ENCODE measurements at regions of chr17 and their contacts with region 1.

Region 1: DNA sequence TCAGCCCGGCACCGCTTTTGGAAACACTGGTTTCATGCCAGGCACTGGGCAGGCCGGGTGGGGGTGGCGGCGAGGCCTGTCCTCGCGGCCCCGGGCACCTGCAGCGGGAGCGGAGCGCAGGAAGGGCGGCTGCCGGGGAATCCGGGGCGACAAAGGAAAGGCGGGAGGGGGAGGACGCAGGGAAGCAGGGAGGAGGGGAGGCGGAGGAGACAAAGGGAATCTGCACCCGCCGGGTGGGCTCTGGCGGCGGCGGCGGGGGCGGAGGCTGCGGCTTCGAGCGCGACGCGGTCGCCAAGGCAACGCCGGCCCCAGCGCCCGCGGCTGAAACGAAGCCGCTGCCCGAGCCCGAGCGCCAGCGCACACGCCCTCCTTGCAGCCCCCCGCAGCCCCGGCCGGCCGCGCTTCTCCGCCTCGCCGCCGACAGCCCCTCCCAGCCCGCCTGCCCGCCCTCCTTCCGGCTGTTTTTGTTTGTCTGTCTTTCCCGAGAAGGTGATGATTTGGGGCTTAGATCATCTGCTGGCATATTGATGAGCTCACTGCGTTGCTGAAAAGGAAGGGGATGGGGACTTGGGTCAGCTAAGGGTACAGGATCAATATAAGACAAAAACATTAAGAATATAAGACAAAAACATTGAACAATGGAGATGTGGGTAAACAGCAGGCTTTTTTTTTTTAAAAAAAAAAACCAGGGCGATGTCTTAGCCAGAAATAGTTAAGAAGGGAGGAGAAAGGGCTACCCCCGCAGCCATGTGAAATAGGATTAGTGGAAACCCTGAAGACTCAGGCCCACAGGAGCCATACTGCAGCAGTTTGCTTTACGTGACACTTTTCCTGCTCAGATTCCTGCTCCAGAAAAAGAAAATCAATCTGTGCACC is 32.7 kb downstream of the CDK5R1 start:
- DNase-seq: peak; percentile 56
- H3K4me3 Mint-ChIP-seq: peak overlapping the region; percentile 88
- H3K27ac Mint-ChIP-seq: peak overlapping the region; percentile 97
- H3K4me1 Mint-ChIP-seq: peaks cover 82% of the 10 kb centered on the region
- H3K27me3 Mint-ChIP-seq: peaks cover 7% of the 10 kb centered on the region

Region 2: DNA sequence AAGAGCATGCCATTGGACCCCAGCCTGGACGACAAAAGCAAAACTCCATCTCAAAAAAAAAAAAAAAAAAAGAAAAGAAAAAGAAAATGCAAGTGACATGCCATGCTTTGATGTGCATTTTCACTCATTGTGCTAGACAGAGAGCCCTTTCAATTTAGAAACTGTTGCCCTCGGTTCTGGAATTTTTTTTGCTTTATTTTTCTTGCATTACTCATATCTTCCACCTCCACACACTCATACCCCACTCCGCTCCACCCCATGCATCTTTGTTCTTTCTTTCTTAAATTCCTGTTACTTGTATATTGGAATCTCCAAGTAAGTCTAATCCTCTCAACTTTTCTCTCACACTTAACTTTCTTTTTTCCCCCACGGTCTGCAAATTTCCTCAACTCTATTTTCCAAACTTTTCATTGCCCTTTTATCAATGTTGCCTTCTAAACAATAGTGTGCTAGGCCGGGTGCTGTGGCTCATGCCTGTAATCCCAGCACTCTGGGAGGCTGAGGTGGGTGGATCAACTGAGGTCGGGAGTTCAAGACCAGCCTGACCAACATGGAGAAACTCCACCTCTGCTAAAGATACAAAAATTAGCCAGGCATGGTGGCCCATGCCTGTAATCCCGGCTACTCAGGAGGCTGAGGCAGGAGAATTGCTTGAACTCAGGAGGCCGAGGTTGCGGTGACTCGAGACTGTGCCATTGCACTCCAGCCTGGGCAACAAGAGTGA is 599.5 kb before region 1 on chr17:
- intact Hi-C with region 1: loop called (anchors 10 kb)
- DNase-seq: no peak
- H3K4me3 Mint-ChIP-seq: peak overlapping the region; percentile 9
- H3K27ac Mint-ChIP-seq: peak overlapping the region; percentile 83
- H3K4me1 Mint-ChIP-seq: peaks cover 19% of the 10 kb centered on the region
- H3K27me3 Mint-ChIP-seq: peaks cover 17% of the 10 kb centered on the region

Region 3: GRCh38 chr17:32444308-32445073 is 75.0 kb before region 1 on chr17 and contains the start of gene PSMD11:
- intact Hi-C with region 1: loop called (anchors 1 kb)
- DNase-seq: peak; percentile 98
- H3K4me3 Mint-ChIP-seq: peak within 1 kb of the TSS; percentile 94
- H3K27ac Mint-ChIP-seq: peak within 1 kb of the TSS; percentile 88
- H3K4me1 Mint-ChIP-seq: peaks cover 28% of the 10 kb centered on the region
- H3K27me3 Mint-ChIP-seq: peaks cover 5% of the 10 kb centered on the region
- total RNA-seq, gene PSMD11: 190 and 198 TPM in 2 replicates

Region 4: DNA sequence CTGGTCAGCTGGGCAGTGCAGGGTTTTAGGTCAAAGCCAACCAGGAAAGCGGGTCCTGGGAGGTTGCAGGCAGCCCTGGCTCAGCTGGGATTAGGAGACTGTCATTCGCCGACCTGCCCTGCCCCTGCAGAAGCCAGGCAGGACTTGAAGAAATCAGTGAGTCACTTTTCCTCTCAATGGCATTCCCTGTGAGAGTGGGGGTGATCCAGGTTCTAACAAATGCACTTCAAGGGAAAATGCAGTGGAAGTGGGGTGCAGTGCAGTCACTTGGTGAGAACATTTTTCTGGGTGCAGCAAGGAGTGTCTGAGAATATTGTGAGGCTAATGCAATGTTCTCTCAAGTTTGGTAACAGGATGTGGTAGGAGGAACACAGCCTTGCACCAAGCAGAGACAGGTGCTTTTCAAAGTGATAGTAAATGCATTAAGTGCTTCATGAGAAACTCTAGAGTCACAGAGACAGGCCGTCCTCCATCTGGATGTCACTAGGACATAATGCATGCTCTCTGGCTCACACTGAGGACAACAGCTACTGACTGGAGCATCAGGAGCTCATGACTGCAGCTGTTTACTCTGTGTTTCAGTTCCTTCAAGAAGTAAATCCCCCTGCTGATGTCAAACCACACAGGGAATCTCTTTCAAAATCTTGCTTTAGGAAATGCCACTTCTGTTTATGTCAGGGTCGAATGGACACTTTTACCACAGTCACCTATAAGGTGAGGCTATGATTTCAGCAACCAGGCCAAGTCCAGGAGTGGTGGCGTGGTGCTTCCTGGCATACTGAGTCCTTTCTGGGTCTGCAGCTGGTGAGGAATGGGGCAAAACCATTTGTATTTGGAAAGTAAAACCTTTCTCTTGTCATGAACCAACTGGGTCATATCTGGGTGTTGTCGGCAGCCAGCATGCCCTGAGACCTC is 16.0 kb before region 1 on chr17:
- intact Hi-C with region 1: loop called (anchors 1 kb)
- DNase-seq: peak; percentile 52
- H3K4me3 Mint-ChIP-seq: peak overlapping the region; percentile 63
- H3K27ac Mint-ChIP-seq: peak overlapping the region; percentile 92
- H3K4me1 Mint-ChIP-seq: peaks cover 42% of the 10 kb centered on the region
- H3K27me3 Mint-ChIP-seq: peaks cover 4% of the 10 kb centered on the region

Region 5: GRCh38 chr17:32609085-32609484 is 89.6 kb after region 1 on chr17:
- intact Hi-C with region 1: loop called (anchors 5 kb)
- DNase-seq: peak; percentile 37
- H3K4me3 Mint-ChIP-seq: no peak overlapping the region
- H3K27ac Mint-ChIP-seq: no peak overlapping the region
- H3K4me1 Mint-ChIP-seq: peaks cover 7% of the 10 kb centered on the region
- H3K27me3 Mint-ChIP-seq: peaks cover 5% of the 10 kb centered on the region

Region 6: GRCh38 chr17:34378664-34379101 is 1859.2 kb after region 1 on chr17:
- intact Hi-C with region 1: loop called (anchors 5 kb)
- DNase-seq: peak; percentile 32
- H3K4me3 Mint-ChIP-seq: peak overlapping the region; percentile 62
- H3K27ac Mint-ChIP-seq: peak overlapping the region; percentile 77
- H3K4me1 Mint-ChIP-seq: peaks cover 75% of the 10 kb centered on the region
- H3K27me3 Mint-ChIP-seq: peaks cover 12% of the 10 kb centered on the region